ENCODE measurements at regions of chr10 and their contacts with region 1.

Region 1: GRCh38 chr10:103759100-103759781 is 96.1 kb downstream of the SH3PXD2A start:
- DNase-seq: peak in 4 of 5 donors; percentile 24 to 44 (median 31)
- H3K4me3 ChIP-seq: peak overlapping the region in 1 of 2 donors; percentile 1
- H3K4me3 Mint-ChIP-seq: peak overlapping the region in 6 of 8 donors; percentile 51 to 76 (median 70)
- H3K27ac ChIP-seq: no peak overlapping the region
- H3K27ac Mint-ChIP-seq: peak overlapping the region; percentile 70 to 87 (median 79)
- H3K4me1 ChIP-seq: peaks cover 64% of the 10 kb centered on the region
- H3K4me1 Mint-ChIP-seq: peaks cover 33 to 67% (median 52%) of the 10 kb centered on the region in 4 donors
- H3K27me3 ChIP-seq: no peaks in the 10 kb centered on the region
- H3K27me3 Mint-ChIP-seq: no peaks in the 10 kb centered on the region

Region 2: DNA sequence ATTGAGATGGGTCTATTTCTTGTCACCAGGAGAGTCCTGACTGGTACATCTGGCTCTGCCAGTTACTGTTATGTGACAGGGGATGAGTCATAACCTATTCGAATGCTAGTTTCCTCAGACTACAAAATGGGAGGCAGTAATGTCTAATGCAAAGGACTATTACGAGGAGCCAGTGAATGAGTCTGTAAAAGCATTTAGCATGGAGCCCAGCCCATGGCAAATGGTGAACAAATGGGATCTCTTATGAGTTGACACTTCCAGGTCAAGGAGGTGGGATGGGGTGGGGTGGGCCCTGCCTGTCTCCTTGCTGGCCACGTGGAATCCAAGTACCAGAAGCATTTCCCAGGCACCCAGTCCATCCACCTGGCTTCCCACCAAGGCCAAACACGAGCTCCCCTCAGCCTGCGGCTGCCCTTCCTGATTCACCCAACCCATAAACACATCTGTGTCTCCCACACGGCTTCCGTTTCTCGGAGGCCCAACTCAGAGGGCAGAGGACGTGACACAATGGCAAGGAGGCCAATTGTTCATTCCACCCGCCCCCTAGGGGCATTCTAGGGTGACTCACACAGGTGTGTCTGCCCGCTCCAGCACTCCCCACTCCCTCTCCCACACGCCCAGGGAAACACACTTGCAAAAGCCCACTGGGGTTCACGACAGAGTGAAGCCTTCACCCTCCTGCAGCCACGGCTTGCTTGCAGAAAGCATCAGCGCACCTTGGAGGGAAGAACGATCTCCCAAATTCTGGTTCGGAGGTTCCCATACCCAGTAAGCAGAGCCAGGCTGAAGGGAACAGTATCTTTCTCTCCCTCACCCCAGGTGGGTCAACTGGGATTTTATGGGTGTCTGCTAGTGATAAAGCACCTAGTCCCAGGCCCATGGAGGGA is 13.7 kb before region 1 on chr10:
- CTCF ChIA-PET with region 1: interaction called, 88 read pairs
- POLR2A ChIA-PET with region 1: interaction called, 168 read pairs
- intact Hi-C with region 1: no loop called
- DNase-seq: peak; percentile 34 to 76 (median 38)
- H3K4me3 ChIP-seq: peak overlapping the region in 1 of 2 donors; percentile 15
- H3K4me3 Mint-ChIP-seq: peak overlapping the region in 5 of 8 donors; percentile 31 to 75 (median 55)
- H3K27ac ChIP-seq: no peak overlapping the region
- H3K27ac Mint-ChIP-seq: peak overlapping the region; percentile 53 to 95 (median 77)
- H3K4me1 ChIP-seq: peaks cover 45% of the 10 kb centered on the region
- H3K4me1 Mint-ChIP-seq: peaks cover 23 to 54% (median 38%) of the 10 kb centered on the region in 4 donors
- H3K27me3 ChIP-seq: no peaks in the 10 kb centered on the region
- H3K27me3 Mint-ChIP-seq: no peaks in the 10 kb centered on the region

Region 3: DNA sequence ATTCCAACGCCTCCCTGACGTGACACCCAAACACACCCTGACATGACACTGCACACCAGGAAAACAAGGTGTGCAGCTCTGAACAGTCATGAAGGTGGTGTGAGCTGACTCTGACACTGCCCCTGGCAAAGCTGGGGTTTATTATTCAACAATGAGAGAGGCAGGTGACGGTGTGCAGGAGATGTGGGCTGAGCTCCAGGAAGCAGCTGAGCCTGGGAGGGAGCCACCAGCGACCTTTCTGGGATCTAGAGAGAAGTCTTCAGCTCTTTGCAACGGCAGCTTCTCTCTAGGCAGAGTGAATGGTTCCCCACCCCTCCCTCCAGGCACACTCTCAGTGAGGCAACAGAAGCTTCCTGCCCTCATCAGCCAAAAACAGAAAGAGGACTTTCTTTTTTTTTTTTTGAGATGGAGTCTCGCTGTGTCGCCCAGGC is 30.5 kb after region 1 on chr10:
- CTCF ChIA-PET with region 1: no interaction called
- POLR2A ChIA-PET with region 1: interaction called, 18 read pairs
- intact Hi-C with region 1: no loop called
- DNase-seq: no peak
- H3K4me3 ChIP-seq: no peak overlapping the region
- H3K4me3 Mint-ChIP-seq: no peak overlapping the region
- H3K27ac ChIP-seq: no peak overlapping the region
- H3K27ac Mint-ChIP-seq: no peak overlapping the region
- H3K4me1 ChIP-seq: peaks cover 5% of the 10 kb centered on the region
- H3K4me1 Mint-ChIP-seq: peaks cover 2 to 8% (median 6%) of the 10 kb centered on the region in 4 donors
- H3K27me3 ChIP-seq: no peaks in the 10 kb centered on the region
- H3K27me3 Mint-ChIP-seq: peaks cover 2% of the 10 kb centered on the region in 2 donors

Region 4: DNA sequence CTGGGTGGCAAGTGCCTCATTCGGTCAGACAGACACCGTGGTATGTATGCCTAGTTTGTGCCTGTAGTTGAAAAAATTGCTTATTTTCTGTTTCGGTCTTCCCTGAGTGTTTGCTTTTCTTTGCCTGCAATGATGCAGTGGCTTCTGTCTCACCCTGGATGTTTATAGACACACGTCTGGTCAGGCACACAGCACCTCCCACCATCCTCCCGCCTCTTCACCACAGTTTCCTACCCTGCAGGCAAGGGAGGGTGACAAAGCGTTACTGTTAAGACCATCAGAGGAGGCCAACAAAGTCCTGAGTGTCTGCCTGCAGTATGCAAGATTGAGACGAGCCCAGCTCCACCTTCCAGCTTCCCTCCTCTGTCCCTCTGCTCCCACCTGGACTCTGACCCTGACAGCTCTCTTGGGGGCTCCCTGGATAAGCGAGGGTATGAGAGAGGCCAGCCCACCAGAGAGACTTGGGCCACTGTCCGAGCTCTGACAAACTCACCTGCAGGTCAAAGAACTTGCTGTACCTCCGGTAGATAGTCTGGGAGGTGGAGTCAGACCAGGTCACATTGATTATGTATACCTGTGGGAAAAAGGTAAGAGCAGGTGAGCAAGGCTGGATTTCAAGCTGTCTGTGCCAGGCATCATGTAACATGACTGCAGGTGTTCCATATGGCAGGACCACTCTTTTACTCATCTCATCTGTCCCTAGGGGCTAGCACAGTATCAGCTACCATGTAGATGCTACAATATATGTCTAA is 41.7 kb after region 1 on chr10:
- CTCF ChIA-PET with region 1: interaction called, 3 read pairs
- POLR2A ChIA-PET with region 1: interaction called, 10 read pairs
- intact Hi-C with region 1: no loop called
- DNase-seq: peak; percentile 29 to 66 (median 39)
- H3K4me3 ChIP-seq: no peak overlapping the region
- H3K4me3 Mint-ChIP-seq: peak overlapping the region in 7 of 8 donors; percentile 3 to 62 (median 25)
- H3K27ac ChIP-seq: no peak overlapping the region
- H3K27ac Mint-ChIP-seq: peak overlapping the region; percentile 2 to 89 (median 42)
- H3K4me1 ChIP-seq: peaks cover 32% of the 10 kb centered on the region
- H3K4me1 Mint-ChIP-seq: peaks cover 16 to 40% (median 24%) of the 10 kb centered on the region in 4 donors
- H3K27me3 ChIP-seq: no peaks in the 10 kb centered on the region
- H3K27me3 Mint-ChIP-seq: no peaks in the 10 kb centered on the region

Measured in CD4-positive, alpha-beta memory T cell (primary cell).